Breast epithelium (tissue), 4 donors: ENCODE measurements at regions of chr12 and their contacts with region 1.

Region 1: DNA sequence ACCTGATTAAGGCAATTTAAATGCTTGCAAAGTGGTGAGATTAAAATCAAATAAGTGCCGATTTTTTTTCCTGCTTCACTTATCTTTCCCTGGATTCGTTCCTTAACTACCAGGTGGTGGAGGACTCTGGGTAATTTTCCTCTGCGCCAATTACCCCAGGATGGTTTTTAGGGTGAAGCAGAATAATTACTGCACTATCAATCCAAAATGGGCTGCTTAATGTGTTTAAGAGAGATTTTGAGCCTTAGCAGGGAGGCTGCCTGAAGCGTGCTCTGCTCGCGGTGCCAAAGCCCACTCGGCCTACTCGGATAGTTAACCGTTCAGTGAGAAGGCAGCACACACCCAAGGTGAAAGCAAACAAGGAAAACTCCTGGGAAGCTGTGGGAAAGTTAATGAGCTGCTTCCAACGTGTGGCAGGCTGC is 274.9 kb upstream of the LMO3 start:
- DNase-seq: no peak
- H3K4me3 ChIP-seq: no peak overlapping the region
- H3K27ac ChIP-seq: no peak overlapping the region
- H3K4me1 ChIP-seq: no peaks in the 10 kb centered on the region
- H3K27me3 ChIP-seq: no peaks in the 10 kb centered on the region
- CTCF ChIP-seq: no peak
- POLR2A ChIP-seq: no peak

Region 2: GRCh38 chr12:16870845-16871244 is 10.0 kb before region 1 on chr12:
- intact Hi-C with region 1: loop called (anchors 2 kb)
- DNase-seq: no peak
- H3K4me3 ChIP-seq: no peak overlapping the region
- H3K27ac ChIP-seq: no peak overlapping the region
- H3K4me1 ChIP-seq: no peaks in the 10 kb centered on the region
- H3K27me3 ChIP-seq: no peaks in the 10 kb centered on the region
- CTCF ChIP-seq: no peak
- POLR2A ChIP-seq: no peak